Activated T-helper 1 cell treated with anti-CD3 and anti-CD28 coated beads, Interleukin-12 subunit alpha, Interleukin-12 subunit beta, Interleukin-2, Interleukin-4 antibody, amounts not matched to agents 30 ng/mL and 10 ng/mL and 1 ng/mL, durations not matched to agents 14 hours and 24 hours and 36 hours (primary cell): ENCODE measurements at regions of chr10 and their contacts with region 1.

Region 1: GRCh38 chr10:63707254-63707910 is 186.2 kb downstream of the REEP3 start:
- DNase-seq: peak; percentile 19
- H3K4me3 Mint-ChIP-seq: peak overlapping the region; percentile 3
- H3K27ac Mint-ChIP-seq: peak overlapping the region; percentile 61
- H3K4me1 Mint-ChIP-seq: peaks cover 22% of the 10 kb centered on the region
- H3K27me3 Mint-ChIP-seq: no peaks in the 10 kb centered on the region

Region 2: DNA sequence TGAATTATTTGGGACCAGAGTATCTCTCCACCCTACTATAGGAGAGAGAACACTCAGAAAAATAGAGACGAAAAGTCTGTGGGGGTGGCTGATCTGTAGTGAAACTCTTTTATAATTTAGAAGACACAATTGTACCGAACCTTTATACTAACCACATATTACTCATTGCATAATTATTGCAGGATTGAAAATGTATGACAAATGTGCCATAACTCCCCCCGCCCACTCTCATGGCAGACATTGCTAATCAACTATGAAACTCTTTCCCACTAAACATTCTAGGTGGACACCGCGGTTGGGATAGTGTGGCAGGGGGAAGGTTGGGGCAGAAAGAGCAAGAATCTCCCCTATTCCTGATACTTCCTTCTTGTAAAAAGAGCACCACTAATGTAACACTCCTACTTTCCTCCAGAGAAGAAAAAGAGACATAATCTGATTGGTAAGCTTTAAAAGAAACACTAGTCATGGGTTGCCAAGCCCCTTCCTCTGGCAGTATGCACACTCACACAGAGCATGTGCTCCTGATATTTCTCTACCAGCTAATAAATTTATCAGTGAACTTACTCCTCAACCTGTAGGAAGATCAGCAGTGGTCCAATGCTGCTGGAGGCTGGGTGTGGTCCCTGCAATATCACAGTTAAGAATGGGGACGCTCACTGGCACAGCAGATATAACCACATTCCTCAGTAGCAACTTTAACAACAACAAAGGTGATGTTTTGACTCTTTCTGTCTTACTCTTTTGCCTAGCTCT is 1824.6 kb before region 1 on chr10:
- intact Hi-C with region 1: loop called (anchors 5 kb)
- DNase-seq: no peak
- H3K4me3 Mint-ChIP-seq: no peak overlapping the region
- H3K27ac Mint-ChIP-seq: peak overlapping the region; percentile 44
- H3K4me1 Mint-ChIP-seq: peaks cover 19% of the 10 kb centered on the region
- H3K27me3 Mint-ChIP-seq: peaks cover 1% of the 10 kb centered on the region

Region 3: GRCh38 chr10:62851442-62851841 is 855.9 kb before region 1 on chr10:
- intact Hi-C with region 1: loop called (anchors 1 kb)
- DNase-seq: no peak
- H3K4me3 Mint-ChIP-seq: no peak overlapping the region
- H3K27ac Mint-ChIP-seq: peak overlapping the region; percentile 9
- H3K4me1 Mint-ChIP-seq: peaks cover 51% of the 10 kb centered on the region
- H3K27me3 Mint-ChIP-seq: peaks cover 5% of the 10 kb centered on the region

Region 4: GRCh38 chr10:63173468-63174232 is 533.7 kb before region 1 on chr10:
- intact Hi-C with region 1: loop called (anchors 1 kb)
- DNase-seq: no peak
- H3K4me3 Mint-ChIP-seq: peak overlapping the region; percentile 61
- H3K27ac Mint-ChIP-seq: peak overlapping the region; percentile 86
- H3K4me1 Mint-ChIP-seq: peaks cover 78% of the 10 kb centered on the region
- H3K27me3 Mint-ChIP-seq: no peaks in the 10 kb centered on the region

Region 5: GRCh38 chr10:63355682-63356081 is 351.7 kb before region 1 on chr10:
- intact Hi-C with region 1: loop called (anchors 1 kb)
- DNase-seq: no peak
- H3K4me3 Mint-ChIP-seq: no peak overlapping the region
- H3K27ac Mint-ChIP-seq: peak overlapping the region; percentile 54
- H3K4me1 Mint-ChIP-seq: peaks cover 14% of the 10 kb centered on the region
- H3K27me3 Mint-ChIP-seq: no peaks in the 10 kb centered on the region

Region 6: GRCh38 chr10:63629363-63630084 is 77.9 kb before region 1 on chr10:
- intact Hi-C with region 1: loop called (anchors 1 kb)
- DNase-seq: peak; percentile 71
- H3K4me3 Mint-ChIP-seq: peak overlapping the region; percentile 89
- H3K27ac Mint-ChIP-seq: peak overlapping the region; percentile 90
- H3K4me1 Mint-ChIP-seq: peaks cover 37% of the 10 kb centered on the region
- H3K27me3 Mint-ChIP-seq: no peaks in the 10 kb centered on the region

Region 7: GRCh38 chr10:64175271-64175962 is 468.0 kb after region 1 on chr10:
- intact Hi-C with region 1: no loop called
- DNase-seq: no peak
- H3K4me3 Mint-ChIP-seq: no peak overlapping the region
- H3K27ac Mint-ChIP-seq: no peak overlapping the region
- H3K4me1 Mint-ChIP-seq: no peaks in the 10 kb centered on the region
- H3K27me3 Mint-ChIP-seq: no peaks in the 10 kb centered on the region